Lower leg skin (tissue), 4 donors: ENCODE measurements at regions of chr4 and their contacts with region 1.

Region 1: DNA sequence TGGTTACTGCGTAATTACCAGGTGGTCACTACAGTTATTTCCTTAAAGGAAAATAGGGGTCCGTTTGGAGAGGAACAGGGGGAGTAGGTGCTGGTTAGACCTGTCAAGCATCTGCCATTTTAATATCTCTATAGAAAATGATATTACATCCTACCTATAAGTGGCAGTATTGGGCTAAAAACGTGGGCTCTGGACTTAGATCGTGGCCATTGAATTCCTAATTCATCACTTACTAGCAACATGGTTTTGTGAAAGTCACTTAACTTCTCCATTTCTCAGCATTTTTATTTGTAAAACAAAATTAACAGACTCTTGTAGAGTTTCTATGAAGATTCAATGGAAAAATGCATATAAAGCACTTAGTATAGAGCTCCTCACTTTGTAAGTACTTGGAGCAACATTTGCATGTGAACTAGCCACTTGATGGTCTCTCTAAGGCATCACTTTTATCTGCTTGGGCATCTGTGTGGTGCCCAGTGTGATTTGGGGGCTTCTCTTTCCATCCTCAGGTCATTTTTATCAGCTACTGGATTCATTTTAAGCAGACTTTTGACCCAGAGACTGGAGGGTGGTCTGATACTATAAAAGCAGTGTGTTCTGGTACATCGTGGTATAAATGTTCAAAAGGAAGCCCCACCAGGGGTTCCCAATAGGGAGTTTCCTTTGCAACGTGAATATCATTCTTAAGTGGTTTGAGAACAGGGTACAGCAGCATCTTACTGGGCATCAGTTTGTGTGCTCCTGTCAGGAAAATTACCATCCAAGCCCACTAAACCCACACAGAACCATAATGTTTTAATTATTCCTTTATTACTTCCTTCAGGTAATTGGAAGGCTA is 42.7 kb upstream of the RASSF6 start:
- DNase-seq: no peak
- H3K4me3 ChIP-seq: no peak overlapping the region
- CTCF ChIP-seq: no peak
- POLR2A ChIP-seq: no peak

Region 2: GRCh38 chr4:73593631-73594241 is 69.2 kb before region 1 on chr4:
- intact Hi-C with region 1: no loop called
- DNase-seq: no peak
- H3K4me3 ChIP-seq: no peak overlapping the region
- CTCF ChIP-seq: no peak
- POLR2A ChIP-seq: no peak

Region 3: GRCh38 chr4:73816814-73817213 is 153.9 kb after region 1 on chr4:
- intact Hi-C with region 1: no loop called
- DNase-seq: no peak
- H3K4me3 ChIP-seq: no peak overlapping the region
- CTCF ChIP-seq: no peak
- POLR2A ChIP-seq: no peak

Region 4: GRCh38 chr4:74133786-74134499 is 471.0 kb after region 1 on chr4:
- intact Hi-C with region 1: loop called (anchors 5 kb)
- DNase-seq: peak; percentile 78 to 93
- H3K4me3 ChIP-seq: no peak overlapping the region
- CTCF ChIP-seq: peak in 1 of 3 donors; percentile 38
- POLR2A ChIP-seq: no peak

Region 5: DNA sequence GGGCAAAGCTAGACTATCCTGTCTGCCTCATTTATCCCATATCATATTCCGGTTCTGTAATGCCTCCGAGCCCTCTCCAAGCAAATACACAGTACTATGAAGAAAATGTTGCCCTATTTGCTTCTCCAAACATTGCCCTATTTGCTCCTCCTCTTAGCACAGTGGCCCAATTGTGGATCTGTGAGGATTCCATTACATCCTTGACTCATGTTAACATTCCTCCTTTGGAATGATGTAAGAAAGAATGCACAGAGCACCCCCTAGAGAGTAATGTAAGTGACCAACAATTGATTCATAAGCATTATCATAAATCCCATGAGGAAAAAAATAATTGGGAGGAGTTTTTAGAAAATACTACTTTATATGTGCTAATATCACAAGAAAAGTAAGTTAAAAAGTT is 1142.7 kb after region 1 on chr4:
- intact Hi-C with region 1: no loop called
- DNase-seq: no peak
- H3K4me3 ChIP-seq: no peak overlapping the region
- CTCF ChIP-seq: no peak
- POLR2A ChIP-seq: no peak